Left cardiac atrium (tissue), 4 donors: ENCODE measurements at regions of chr13 and their contacts with region 1.

Region 1: DNA sequence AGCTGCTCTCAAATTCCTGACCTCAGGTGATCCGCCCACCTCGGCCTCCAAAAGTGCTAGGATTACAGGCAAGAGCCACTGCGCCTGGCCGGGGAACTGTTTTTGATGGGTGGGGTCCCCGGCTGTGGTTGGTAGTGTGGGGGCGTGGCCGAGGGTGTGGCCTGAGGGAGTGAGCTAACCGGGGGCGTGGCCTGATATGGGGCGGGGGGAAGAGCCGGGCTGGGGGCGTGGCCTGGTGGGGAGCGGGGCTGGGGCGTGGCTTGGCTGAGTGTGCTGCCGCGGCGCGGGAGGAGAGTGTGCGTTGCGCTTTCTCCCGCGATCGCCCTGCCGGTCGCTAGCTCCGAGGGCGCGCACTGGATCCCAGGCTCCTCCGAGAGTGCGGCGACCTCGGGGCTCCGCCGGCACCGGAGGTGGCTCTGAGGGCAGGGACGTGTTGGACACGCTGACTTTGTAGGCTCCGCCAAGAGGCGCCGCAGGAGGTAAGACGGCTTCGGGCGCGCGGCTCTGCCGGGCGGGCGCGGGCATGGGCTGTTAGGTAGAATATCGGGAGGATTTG is at the start of gene SPATA13:
- DNase-seq: peak; percentile 96
- ATAC-seq: peak; percentile 98 to 99
- total RNA-seq, gene SPATA13: 9.0 to 11.2 TPM

Region 2: GRCh38 chr13:23763318-23763717 is 397.2 kb before region 1 on chr13:
- intact Hi-C with region 1: no loop called
- DNase-seq: no peak
- ATAC-seq: no peak

Region 3: GRCh38 chr13:24053519-24054251 is 106.8 kb before region 1 on chr13:
- intact Hi-C with region 1: loop called in 1 of 2 experiments (anchors 5 kb)
- DNase-seq: peak; percentile 42
- ATAC-seq: peak; percentile 68 to 81